Activated CD4-positive, alpha-beta memory T cell treated with anti-CD3 and anti-CD28 coated beads for 36 hours (primary cell): ENCODE measurements at regions of chr11 and their contacts with region 1.

Region 1: DNA sequence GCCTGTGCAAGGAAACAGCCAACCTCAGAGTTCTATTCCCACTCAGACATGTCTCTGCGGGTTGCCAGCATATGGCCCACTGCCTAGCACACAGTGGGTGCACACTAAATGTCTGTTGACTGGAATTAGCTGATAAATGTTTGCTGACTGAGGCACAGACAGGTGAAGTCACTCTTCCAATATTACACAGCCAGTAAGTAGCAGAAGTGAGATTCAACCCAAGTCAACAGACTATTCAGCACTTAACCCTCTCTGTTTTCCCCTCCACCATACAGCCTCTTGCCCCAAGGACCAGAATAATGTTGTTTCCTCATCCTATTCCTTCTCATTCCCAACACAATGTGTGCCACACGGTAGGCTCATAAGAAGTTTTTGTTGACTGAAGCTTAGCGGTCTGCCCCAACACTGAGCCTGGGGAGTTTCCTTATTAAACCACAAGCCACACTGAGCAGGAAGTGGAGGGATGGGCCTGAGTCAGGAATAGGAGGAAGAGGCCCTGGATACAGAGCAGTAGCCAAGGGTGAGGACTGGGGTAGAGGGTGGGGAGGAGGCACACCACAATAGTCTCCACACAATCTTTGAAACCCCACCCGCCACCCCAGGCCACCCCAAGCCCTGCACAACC is 15.7 kb upstream of the IL10RA start:
- DNase-seq: peak; percentile 71
- H3K4me3 Mint-ChIP-seq: peak overlapping the region; percentile 46
- H3K27ac Mint-ChIP-seq: peak overlapping the region; percentile 89
- H3K4me1 Mint-ChIP-seq: peaks cover 66% of the 10 kb centered on the region
- H3K27me3 Mint-ChIP-seq: no peaks in the 10 kb centered on the region

Region 2: DNA sequence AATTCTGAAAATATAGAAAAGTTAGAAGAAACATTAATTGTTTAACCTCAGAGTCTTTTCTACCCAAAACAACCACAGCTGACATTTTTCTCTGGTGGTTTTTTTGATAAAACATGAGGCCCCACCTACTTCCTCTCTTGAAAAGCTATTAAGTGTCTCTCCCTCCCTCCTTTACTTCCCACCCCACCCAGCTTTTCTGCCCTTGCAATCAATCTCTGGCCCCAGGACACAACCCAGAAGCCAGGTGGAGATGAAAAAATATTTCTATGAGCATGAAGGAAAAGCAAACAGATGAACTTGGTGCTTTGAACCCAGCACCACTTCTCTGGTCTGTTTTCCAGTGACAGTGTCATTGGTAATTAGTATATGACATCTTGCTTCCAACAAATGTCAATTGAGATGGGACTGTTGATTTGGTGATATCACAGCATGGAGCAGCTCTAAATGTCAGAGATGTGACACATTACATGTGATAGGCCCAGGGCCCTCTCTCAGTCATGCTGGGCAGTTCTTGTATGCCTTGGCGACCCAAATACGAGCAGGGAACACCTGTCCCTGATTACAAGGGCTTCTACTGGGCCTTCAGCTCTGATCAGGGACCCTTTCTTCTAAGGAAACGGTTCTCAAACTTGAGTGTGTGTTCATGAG is 17.4 kb before region 1 on chr11:
- CTCF ChIA-PET with region 1: interaction called, 9 read pairs
- POLR2A ChIA-PET with region 1: interaction called, 5 read pairs
- intact Hi-C with region 1: loop called (anchors 1 kb)
- DNase-seq: no peak
- H3K4me3 Mint-ChIP-seq: no peak overlapping the region
- H3K27ac Mint-ChIP-seq: peak overlapping the region; percentile 69
- H3K4me1 Mint-ChIP-seq: peaks cover 64% of the 10 kb centered on the region
- H3K27me3 Mint-ChIP-seq: no peaks in the 10 kb centered on the region

Region 3: GRCh38 chr11:117985953-117986887 is 15.7 kb after region 1 on chr11 and contains the start of gene IL10RA:
- CTCF ChIA-PET with region 1: interaction called, 6 read pairs
- POLR2A ChIA-PET with region 1: interaction called, 19 read pairs
- intact Hi-C with region 1: loop called (anchors 1 kb)
- DNase-seq: peak; percentile 91
- H3K4me3 Mint-ChIP-seq: peak within 1 kb of the TSS; percentile 82
- H3K27ac Mint-ChIP-seq: peak within 1 kb of the TSS; percentile 97
- H3K4me1 Mint-ChIP-seq: peaks cover 69% of the 10 kb centered on the region
- H3K27me3 Mint-ChIP-seq: no peaks in the 10 kb centered on the region
- total RNA-seq, gene IL10RA: 114 to 117 TPM

Region 4: GRCh38 chr11:118018390-118018789 is 47.9 kb after region 1 on chr11:
- CTCF ChIA-PET with region 1: no interaction called
- POLR2A ChIA-PET with region 1: no interaction called
- intact Hi-C with region 1: no loop called
- DNase-seq: no peak
- H3K4me3 Mint-ChIP-seq: no peak overlapping the region
- H3K27ac Mint-ChIP-seq: no peak overlapping the region
- H3K4me1 Mint-ChIP-seq: peaks cover 28% of the 10 kb centered on the region
- H3K27me3 Mint-ChIP-seq: no peaks in the 10 kb centered on the region